ENCODE measurements at regions of chr12 and their contacts with region 1.

Region 1: DNA sequence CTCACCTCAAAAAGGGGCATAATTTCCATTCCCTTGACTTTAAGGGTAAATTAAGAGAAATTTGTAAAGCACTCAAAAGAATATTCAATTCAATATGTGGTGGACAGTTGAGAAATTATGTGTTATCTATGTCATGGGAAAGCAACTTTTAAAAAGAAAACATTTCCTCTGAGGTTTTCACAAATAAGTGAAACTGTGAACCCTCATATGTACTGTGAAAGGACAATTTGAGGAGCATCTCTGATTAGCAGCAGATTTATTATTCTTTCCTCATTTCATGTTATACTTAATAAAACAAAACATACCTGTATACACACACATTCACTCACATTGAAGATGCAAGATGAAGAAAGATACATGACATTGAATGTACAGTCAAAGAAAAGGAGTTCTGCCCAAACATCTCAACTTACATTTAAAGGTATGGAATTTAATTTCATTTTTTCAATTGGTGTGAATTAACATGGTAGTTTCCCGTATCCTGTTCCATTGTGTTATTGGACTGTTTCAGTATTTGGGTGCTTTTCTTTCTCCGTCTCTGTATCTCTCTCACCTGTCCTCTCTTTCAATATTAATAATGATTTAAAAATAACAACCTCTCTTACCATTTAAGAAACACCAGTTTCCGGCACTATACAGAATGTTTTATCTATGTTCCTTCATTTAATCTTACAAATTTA is at the start of gene KLRF1:
- DNase-seq: no peak
- H3K4me3 ChIP-seq: no peak within 1 kb of the TSS
- H3K27ac ChIP-seq: no peak within 1 kb of the TSS
- H3K4me1 ChIP-seq: no peaks in the 10 kb centered on the region
- H3K27me3 ChIP-seq: peaks cover 20% of the 10 kb centered on the region; the same call in 1 of the 2 replicates
- total RNA-seq, gene KLRF1: not detected in 2 replicates

Region 2: DNA sequence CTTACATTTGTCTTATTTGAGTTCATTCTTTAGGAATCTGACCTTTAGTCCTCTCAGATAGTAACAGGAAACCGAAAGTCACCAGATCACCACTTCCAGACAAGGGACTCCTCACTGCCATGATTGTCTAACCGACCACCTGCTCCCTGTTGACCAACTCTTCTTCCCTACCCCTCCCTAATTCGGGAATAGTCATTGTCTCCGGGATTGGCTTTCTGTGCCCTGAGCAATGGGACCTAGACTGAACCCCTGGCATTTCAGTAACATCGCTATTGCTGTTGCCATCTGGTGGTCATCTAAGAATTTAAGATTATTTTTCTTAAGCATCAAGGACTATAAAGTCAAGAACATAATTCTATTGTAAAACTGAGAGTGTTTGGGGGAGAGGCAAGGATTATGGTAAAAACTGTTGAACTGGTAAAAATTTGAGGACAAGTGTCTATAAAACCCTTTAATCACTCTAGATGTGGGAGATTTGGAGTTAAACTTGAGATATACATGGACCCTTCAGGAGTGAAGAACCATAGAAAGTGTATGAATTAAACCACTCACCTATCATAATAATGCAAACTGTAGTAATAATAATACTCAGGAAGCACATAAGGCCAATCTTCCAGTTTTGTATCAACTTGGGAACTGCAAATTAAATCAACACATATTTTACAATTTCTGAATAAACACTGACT is 98.5 kb after region 1 on chr12:
- in situ Hi-C with region 1: loop called (anchors 10 kb)
- DNase-seq: peak; percentile 62
- H3K4me3 ChIP-seq: peak overlapping the region; percentile 31; the same call in 1 of the 2 replicates
- H3K27ac ChIP-seq: no peak overlapping the region
- H3K4me1 ChIP-seq: no peaks in the 10 kb centered on the region; the same call in 1 of the 2 replicates
- H3K27me3 ChIP-seq: peaks cover 5% of the 10 kb centered on the region; the same call in 1 of the 2 replicates

Region 3: GRCh38 chr12:10052193-10052913 is 225.0 kb after region 1 on chr12:
- in situ Hi-C with region 1: no loop called
- DNase-seq: no peak
- H3K4me3 ChIP-seq: no peak overlapping the region
- H3K27ac ChIP-seq: no peak overlapping the region
- H3K4me1 ChIP-seq: no peaks in the 10 kb centered on the region
- H3K27me3 ChIP-seq: no peaks in the 10 kb centered on the region

Measured in GM23248 (cell line).